ENCODE measurements at regions of chr16 and their contacts with region 1.

Region 1: DNA sequence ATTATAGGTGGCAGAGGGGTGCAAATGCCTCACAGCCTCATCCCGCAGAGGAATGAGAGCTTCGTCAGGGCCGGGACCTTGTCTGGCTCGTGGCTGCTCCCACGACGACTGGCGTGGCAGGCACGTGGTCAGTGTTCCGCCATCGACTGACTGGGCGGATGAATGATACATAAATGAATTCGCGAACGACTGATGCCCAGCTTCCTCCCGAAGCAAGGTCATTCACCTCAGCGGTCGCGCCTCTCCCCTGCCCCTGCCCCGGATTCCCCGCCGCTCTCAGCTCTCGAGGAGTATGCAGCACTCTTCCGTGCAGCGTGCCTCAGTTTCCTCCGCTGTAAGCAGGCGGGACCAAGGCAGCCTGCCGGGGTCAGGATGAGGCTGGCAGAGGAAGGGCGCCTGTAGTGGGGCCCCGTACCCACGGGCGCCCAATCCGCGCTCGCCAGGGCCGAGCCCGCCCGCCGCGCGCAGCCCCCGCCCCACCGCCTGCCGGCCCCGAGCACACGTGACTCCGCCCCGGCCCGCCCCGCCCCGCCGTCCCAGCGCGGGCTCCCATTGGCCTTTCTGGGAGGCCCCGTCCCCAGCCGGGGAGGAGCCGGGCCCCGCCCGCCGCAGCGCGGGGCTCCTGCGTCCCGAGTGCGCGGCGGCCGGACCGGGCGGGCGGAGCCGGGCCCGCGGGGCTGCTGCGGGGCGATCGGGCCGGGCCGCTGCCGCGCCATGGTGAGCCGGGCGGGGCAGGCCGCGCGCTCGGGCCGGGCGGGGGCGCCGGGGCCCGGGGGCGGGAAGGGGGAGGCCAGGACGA is at the start of gene SNN:
- DNase-seq: peak; percentile 76 to 91 (median 83)
- ATAC-seq: peak; percentile 89
- H3K4me3 ChIP-seq: peak within 1 kb of the TSS; percentile 77
- H3K4me3 Mint-ChIP-seq: peak within 1 kb of the TSS; percentile 88 to 96 (median 91)
- H3K27ac ChIP-seq: peak within 1 kb of the TSS; percentile 85
- H3K27ac Mint-ChIP-seq: peak within 1 kb of the TSS; percentile 85 to 98 (median 96)
- H3K4me1 ChIP-seq: peaks cover 36 to 80% of the 10 kb centered on the region in 2 donors
- H3K4me1 Mint-ChIP-seq: peaks cover 53 to 87% (median 71%) of the 10 kb centered on the region in 7 donors
- H3K27me3 ChIP-seq: no peaks in the 10 kb centered on the region
- H3K27me3 Mint-ChIP-seq: no peaks in the 10 kb centered on the region
- total RNA-seq, gene SNN: 17.0 to 86.8 (median 34.4) TPM

Region 2: GRCh38 chr16:11619327-11619851 is 48.6 kb before region 1 on chr16:
- CTCF ChIA-PET with region 1: interaction called, 3 read pairs
- POLR2A ChIA-PET with region 1: interaction called, 11 read pairs
- intact Hi-C with region 1: loop called in 1 of 2 experiments (anchors 1 kb)
- DNase-seq: peak in 5 of 9 donors; percentile 39 to 54 (median 52)
- ATAC-seq: peak; percentile 75
- H3K4me3 ChIP-seq: peak overlapping the region; percentile 47
- H3K4me3 Mint-ChIP-seq: peak overlapping the region; percentile 68 to 95 (median 76)
- H3K27ac ChIP-seq: peak overlapping the region; percentile 77
- H3K27ac Mint-ChIP-seq: peak overlapping the region; percentile 76 to 100 (median 98)
- H3K4me1 ChIP-seq: peaks cover 52 to 71% of the 10 kb centered on the region in 2 donors
- H3K4me1 Mint-ChIP-seq: peaks cover 52 to 92% (median 60%) of the 10 kb centered on the region in 7 donors
- H3K27me3 ChIP-seq: no peaks in the 10 kb centered on the region
- H3K27me3 Mint-ChIP-seq: no peaks in the 10 kb centered on the region

Region 3: DNA sequence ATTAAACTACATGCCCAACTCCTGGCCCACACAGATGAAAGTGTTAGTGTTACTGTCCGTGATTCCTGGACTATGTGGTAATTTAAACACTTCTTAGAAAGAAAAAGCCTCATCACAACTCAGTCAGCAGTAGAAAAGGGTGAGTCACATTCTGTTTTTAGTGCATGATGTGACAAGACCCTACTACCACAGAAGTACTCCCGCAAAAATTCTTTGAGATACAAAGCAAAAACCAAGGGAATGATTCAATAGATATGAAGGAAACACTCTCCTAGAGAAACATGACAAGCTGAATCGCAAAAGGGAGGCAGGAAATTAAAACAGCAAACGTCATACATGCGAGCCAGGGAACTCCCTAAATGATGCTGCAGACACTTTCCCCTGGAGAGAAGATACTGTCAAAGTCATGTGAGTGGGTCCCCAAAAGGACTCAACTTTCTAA is 14.7 kb after region 1 on chr16:
- CTCF ChIA-PET with region 1: interaction called, 4 read pairs
- POLR2A ChIA-PET with region 1: interaction called, 5 read pairs
- intact Hi-C with region 1: loop called in 1 of 2 experiments (anchors 2 kb)
- DNase-seq: no peak
- ATAC-seq: peak; percentile 36
- H3K4me3 ChIP-seq: no peak overlapping the region
- H3K4me3 Mint-ChIP-seq: peak overlapping the region in 3 of 10 donors; percentile 14 to 73 (median 16)
- H3K27ac ChIP-seq: peak overlapping the region; percentile 45
- H3K27ac Mint-ChIP-seq: peak overlapping the region; percentile 32 to 95 (median 84)
- H3K4me1 ChIP-seq: peaks cover 11 to 26% of the 10 kb centered on the region in 2 donors
- H3K4me1 Mint-ChIP-seq: peaks cover 31 to 60% (median 51%) of the 10 kb centered on the region in 7 donors
- H3K27me3 ChIP-seq: no peaks in the 10 kb centered on the region
- H3K27me3 Mint-ChIP-seq: no peaks in the 10 kb centered on the region

Measured in naive thymus-derived CD4-positive, alpha-beta T cell (primary cell).